HCT116 (cell line): ENCODE measurements at regions of chr9 and their contacts with region 1.

Region 1: GRCh38 chr9:15332939-15333338 is 25.9 kb upstream of the TTC39B start:
- DNase-seq: no peak
- ATAC-seq: no peak
- H3K4me3 ChIP-seq: no peak overlapping the region
- H3K27ac ChIP-seq: no peak overlapping the region
- H3K4me1 ChIP-seq: no peaks in the 10 kb centered on the region
- H3K27me3 ChIP-seq: peaks cover 11% of the 10 kb centered on the region
- CTCF ChIP-seq: no peak
- POLR2A ChIP-seq: no peak
- RAD21 ChIP-seq: no peak

Region 2: GRCh38 chr9:15135164-15135792 is 197.7 kb before region 1 on chr9:
- CTCF ChIA-PET with region 1: no interaction called
- POLR2A ChIA-PET with region 1: no interaction called
- RAD21 ChIA-PET with region 1: no interaction called
- intact Hi-C with region 1: no loop called
- DNase-seq: peak; percentile 60
- ATAC-seq: peak; percentile 93
- H3K4me3 ChIP-seq: no peak overlapping the region; a peak in 1 of 4 replicates
- H3K27ac ChIP-seq: no peak overlapping the region
- H3K4me1 ChIP-seq: peaks cover 0 to 16% of the 10 kb centered on the region in 2 experiments; a peak in 2 of 4 replicates
- H3K27me3 ChIP-seq: no peaks in the 10 kb centered on the region
- CTCF ChIP-seq: peak; percentile 67 to 88 (median 85)
- POLR2A ChIP-seq: no peak
- RAD21 ChIP-seq: peak; percentile 78

Region 3: DNA sequence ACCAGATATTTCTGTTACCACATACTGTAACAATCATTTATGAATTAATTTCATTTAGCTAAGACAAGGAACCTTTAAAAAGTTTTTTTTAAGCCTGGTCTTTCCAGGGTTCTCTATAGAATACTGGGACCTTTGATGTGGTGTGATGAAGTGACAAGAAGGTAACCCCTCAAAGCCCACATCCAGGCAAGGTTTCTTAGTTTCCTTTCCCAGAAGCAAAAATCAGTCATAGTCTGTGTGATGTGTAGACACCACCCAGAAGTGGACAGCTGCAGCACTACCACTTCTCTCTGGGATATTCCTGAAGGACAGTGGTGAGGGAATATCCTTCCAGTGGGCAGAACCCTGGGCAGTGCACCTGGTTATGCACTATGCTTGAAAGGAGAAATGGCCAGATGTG is 141.6 kb before region 1 on chr9:
- CTCF ChIA-PET with region 1: no interaction called
- POLR2A ChIA-PET with region 1: no interaction called
- RAD21 ChIA-PET with region 1: no interaction called
- intact Hi-C with region 1: no loop called
- DNase-seq: no peak
- ATAC-seq: no peak
- H3K4me3 ChIP-seq: no peak overlapping the region
- H3K27ac ChIP-seq: no peak overlapping the region
- H3K4me1 ChIP-seq: no peaks in the 10 kb centered on the region
- H3K27me3 ChIP-seq: no peaks in the 10 kb centered on the region
- CTCF ChIP-seq: no peak
- POLR2A ChIP-seq: no peak
- RAD21 ChIP-seq: no peak

Region 4: DNA sequence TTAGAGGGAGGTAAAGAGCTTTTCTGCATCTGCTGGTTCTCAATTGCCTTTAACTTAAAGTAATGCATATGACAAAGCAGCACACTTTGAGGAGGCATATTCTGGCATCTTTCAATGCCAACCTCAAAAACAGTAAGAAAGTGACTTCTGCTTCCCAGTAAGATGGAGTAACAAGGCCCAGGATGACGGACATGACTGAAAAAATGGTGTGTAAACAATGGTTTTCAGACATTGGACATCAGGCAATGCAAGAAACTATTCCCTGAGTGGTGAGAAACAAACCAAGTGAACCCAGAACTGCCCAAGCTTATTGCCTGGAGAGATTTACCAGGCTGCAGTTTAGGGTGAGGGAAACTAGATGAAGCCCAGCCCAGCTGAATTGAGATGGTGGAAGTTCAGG is 13.9 kb after region 1 on chr9:
- CTCF ChIA-PET with region 1: no interaction called
- POLR2A ChIA-PET with region 1: no interaction called
- RAD21 ChIA-PET with region 1: no interaction called
- intact Hi-C with region 1: loop called (anchors 1 kb)
- DNase-seq: no peak
- ATAC-seq: no peak
- H3K4me3 ChIP-seq: no peak overlapping the region
- H3K27ac ChIP-seq: no peak overlapping the region
- H3K4me1 ChIP-seq: no peaks in the 10 kb centered on the region
- H3K27me3 ChIP-seq: no peaks in the 10 kb centered on the region
- CTCF ChIP-seq: no peak
- POLR2A ChIP-seq: no peak
- RAD21 ChIP-seq: no peak

Region 5: GRCh38 chr9:15422372-15423230 is 89.7 kb after region 1 on chr9 and contains the start of gene SNAPC3:
- CTCF ChIA-PET with region 1: no interaction called
- POLR2A ChIA-PET with region 1: no interaction called
- RAD21 ChIA-PET with region 1: no interaction called
- intact Hi-C with region 1: no loop called
- DNase-seq: peak; percentile 83
- ATAC-seq: peak; percentile 98
- H3K4me3 ChIP-seq: peak within 1 kb of the TSS; percentile 91 to 94
- H3K27ac ChIP-seq: peak within 1 kb of the TSS; percentile 75
- H3K4me1 ChIP-seq: peaks cover 3 to 14% of the 10 kb centered on the region in 2 experiments; a peak in 3 of 4 replicates
- H3K27me3 ChIP-seq: no peaks in the 10 kb centered on the region
- CTCF ChIP-seq: no peak
- POLR2A ChIP-seq: peak; percentile 80
- RAD21 ChIP-seq: no peak
- total RNA-seq, gene SNAPC3: 26.1 TPM